ENCODE measurements at regions of chr22 and their contacts with region 1.

Region 1: GRCh38 chr22:31561238-31561887 is 65.0 kb downstream of the SFI1 start:
- DNase-seq: peak; percentile 78
- H3K4me3 ChIP-seq: no peak overlapping the region
- H3K27ac ChIP-seq: no peak overlapping the region
- H3K4me1 ChIP-seq: peaks cover 2% of the 10 kb centered on the region
- H3K27me3 ChIP-seq: no peaks in the 10 kb centered on the region
- CTCF ChIP-seq: peak; percentile 80 to 91
- POLR2A ChIP-seq: no peak

Region 2: DNA sequence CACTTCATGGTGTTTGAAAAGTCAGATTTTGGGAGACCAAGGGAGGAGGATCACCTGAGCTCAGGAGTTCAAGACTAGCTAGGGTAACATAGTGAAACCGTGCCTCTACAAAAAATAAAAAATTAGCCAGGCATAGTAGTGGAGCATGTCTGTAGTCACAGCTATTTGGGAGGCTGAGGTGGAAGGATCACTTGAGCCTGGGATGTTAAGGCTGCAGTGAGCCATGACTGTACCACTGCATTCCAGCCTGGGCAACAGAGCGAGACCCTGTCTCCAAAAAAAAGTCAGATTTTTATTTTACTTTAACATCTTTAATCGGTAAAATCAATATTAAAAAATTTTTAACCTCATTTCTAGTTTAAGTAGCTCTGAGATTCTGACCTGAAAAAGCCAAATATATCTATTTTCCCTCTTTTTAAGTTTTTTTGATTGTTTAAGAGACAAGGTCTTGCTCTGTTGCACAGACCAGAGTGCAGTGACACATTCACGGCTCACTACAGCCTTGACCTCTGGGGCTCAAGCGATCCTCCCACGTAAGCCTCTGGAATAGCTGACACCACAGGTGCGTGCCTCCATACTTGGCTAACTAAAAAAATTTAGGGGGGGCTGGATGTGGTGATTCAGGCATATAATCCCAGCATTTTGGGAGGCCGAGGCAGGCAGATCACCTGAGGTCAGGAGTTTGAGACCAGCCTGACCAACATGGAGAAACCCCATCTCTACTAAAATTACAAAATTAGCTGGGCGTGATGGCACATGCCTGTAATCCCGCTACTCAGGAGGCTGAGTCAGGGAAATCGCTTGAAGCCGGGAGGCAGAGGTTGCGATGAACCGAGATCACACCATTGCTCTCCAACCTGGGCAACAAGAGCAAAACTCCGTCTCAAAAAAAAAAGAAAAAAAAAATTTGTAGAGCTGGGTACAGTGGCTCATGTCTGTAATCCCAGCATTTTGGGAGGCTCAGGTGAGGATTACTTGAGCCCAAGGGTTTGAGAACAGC is 16.6 kb before region 1 on chr22:
- CTCF ChIA-PET with region 1: interaction called, 25 read pairs
- POLR2A ChIA-PET with region 1: no interaction called
- dilution Hi-C with region 1: no loop called
- intact Hi-C with region 1: no loop called
- DNase-seq: no peak
- H3K4me3 ChIP-seq: no peak overlapping the region
- H3K27ac ChIP-seq: no peak overlapping the region
- H3K4me1 ChIP-seq: no peaks in the 10 kb centered on the region
- H3K27me3 ChIP-seq: no peaks in the 10 kb centered on the region
- CTCF ChIP-seq: no peak
- POLR2A ChIP-seq: no peak

Region 3: DNA sequence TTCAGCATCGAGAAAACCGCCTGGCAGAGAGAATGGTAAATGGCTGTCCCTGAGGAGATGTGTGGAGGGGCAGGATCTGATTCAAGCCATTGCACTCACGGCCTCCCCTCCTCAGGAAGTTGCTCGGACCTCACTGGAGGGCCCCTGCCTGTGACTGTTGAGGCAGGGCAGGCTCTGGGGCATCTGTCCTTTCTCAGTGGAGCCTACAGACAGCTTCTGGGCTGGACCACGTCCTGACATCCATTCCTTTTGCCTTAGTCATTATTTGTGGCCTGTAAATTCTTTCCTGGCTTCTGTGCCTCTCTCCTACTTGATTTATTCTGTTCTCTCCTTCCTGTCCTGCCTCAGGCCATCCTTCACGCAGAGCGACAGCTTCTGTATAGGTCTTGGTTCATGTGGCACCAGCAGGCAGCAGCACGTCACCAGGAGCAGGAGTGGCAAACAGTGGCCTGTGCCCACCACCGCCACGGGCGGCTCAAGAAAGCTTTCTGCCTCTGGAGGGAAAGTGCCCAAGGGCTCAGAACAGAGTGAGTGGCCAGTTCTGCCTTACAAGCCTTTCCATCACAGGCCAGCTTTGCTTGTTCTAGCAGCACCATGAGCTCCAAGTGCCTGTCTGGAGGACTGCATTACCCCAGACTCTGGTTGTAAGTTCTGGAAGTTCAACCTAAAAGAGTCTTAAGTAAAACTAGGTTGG is 41.0 kb after region 1 on chr22:
- CTCF ChIA-PET with region 1: interaction called, 4 read pairs
- POLR2A ChIA-PET with region 1: interaction called, 4 read pairs
- dilution Hi-C with region 1: no loop called
- intact Hi-C with region 1: loop called (anchors 5 kb)
- DNase-seq: peak; percentile 58
- H3K4me3 ChIP-seq: no peak overlapping the region
- H3K27ac ChIP-seq: peak overlapping the region; percentile 33
- H3K4me1 ChIP-seq: peaks cover 18% of the 10 kb centered on the region
- H3K27me3 ChIP-seq: no peaks in the 10 kb centered on the region
- CTCF ChIP-seq: no peak
- POLR2A ChIP-seq: peak; percentile 11

Region 4: GRCh38 chr22:31611061-31611760 is 49.8 kb after region 1 on chr22:
- CTCF ChIA-PET with region 1: interaction called, 11 read pairs
- POLR2A ChIA-PET with region 1: no interaction called
- dilution Hi-C with region 1: no loop called
- intact Hi-C with region 1: no loop called
- DNase-seq: peak; percentile 32
- H3K4me3 ChIP-seq: no peak overlapping the region
- H3K27ac ChIP-seq: no peak overlapping the region
- H3K4me1 ChIP-seq: peaks cover 2% of the 10 kb centered on the region
- H3K27me3 ChIP-seq: no peaks in the 10 kb centered on the region
- CTCF ChIP-seq: no peak
- POLR2A ChIP-seq: no peak

Region 5: DNA sequence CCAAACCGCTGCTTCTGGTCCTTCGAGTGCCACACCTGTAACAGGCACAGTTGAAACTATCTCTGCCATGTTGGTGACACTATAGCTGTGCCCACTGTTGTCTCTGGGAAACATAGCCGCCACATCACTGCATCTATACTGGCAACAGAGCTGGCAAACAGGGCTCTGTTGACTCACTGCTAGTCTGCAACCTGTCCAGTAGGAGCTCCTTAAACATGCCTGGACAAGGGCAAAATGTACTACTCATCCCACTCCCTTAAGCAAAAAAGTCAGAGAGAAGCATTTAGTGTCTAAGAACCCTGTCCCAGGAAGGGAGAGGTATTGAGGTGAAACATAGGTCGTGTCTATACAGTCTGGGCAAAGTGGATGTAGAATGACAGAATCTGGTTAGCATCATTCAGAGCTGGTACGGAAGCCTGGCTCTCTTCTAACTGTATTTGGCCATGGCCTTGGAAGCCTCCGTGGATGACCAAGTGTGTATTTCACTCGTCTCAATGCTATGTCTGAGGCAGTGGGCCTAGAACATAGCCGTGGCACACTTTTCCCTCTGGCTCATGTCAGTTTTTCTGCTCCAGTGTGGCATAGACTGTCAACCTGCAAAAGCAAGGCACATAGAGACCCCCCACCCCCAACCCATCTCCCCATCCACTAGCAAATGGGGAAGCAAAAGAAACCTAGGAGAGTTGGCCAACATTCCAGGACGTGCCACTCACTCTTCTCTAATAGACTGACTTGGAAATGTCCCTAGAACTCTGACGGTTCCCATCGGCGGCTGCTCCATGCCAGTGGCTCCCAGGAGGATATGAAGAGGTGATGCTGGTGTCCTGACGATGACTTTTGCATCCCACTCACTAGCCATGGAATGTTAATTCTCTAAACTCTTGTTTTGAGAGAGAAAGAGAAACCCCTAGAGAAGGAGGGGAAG is 122.1 kb after region 1 on chr22:
- CTCF ChIA-PET with region 1: no interaction called
- POLR2A ChIA-PET with region 1: no interaction called
- dilution Hi-C with region 1: no loop called
- intact Hi-C with region 1: no loop called
- DNase-seq: no peak
- H3K4me3 ChIP-seq: no peak overlapping the region
- H3K27ac ChIP-seq: no peak overlapping the region
- H3K4me1 ChIP-seq: no peaks in the 10 kb centered on the region
- H3K27me3 ChIP-seq: no peaks in the 10 kb centered on the region
- CTCF ChIP-seq: no peak
- POLR2A ChIP-seq: no peak

Measured in endothelial cell of umbilical vein (primary cell).